Spleen (tissue), 13 donors: ENCODE measurements at regions of chr10 and their contacts with region 1.

Region 1: DNA sequence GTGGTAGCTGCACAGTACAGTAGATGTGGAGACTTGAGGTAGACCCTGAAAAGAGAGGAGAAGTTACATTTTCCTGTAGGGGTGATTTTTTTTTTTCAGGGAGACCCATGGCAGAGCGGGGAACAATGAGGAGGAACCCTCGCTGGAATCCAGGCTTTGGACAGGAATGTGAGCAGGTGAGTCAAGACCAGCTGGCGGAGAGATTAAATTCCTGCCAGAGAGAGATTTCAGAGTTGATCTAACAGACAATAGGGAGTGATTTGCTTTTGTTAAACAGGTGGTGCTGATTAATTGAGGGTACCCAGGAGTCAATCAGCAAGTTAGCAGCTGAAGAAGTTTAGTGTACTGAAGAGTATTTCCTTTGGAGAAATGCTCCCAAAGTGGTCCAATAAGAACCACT is 41.6 kb upstream of the MINDY3 start:
- DNase-seq: no peak
- H3K4me3 ChIP-seq: no peak overlapping the region
- H3K27ac ChIP-seq: no peak overlapping the region
- H3K4me1 ChIP-seq: no peaks in the 10 kb centered on the region
- H3K27me3 ChIP-seq: peaks cover 0 to 27% (median 0%) of the 10 kb centered on the region in 7 donors
- CTCF ChIP-seq: no peak
- POLR2A ChIP-seq: no peak

Region 2: DNA sequence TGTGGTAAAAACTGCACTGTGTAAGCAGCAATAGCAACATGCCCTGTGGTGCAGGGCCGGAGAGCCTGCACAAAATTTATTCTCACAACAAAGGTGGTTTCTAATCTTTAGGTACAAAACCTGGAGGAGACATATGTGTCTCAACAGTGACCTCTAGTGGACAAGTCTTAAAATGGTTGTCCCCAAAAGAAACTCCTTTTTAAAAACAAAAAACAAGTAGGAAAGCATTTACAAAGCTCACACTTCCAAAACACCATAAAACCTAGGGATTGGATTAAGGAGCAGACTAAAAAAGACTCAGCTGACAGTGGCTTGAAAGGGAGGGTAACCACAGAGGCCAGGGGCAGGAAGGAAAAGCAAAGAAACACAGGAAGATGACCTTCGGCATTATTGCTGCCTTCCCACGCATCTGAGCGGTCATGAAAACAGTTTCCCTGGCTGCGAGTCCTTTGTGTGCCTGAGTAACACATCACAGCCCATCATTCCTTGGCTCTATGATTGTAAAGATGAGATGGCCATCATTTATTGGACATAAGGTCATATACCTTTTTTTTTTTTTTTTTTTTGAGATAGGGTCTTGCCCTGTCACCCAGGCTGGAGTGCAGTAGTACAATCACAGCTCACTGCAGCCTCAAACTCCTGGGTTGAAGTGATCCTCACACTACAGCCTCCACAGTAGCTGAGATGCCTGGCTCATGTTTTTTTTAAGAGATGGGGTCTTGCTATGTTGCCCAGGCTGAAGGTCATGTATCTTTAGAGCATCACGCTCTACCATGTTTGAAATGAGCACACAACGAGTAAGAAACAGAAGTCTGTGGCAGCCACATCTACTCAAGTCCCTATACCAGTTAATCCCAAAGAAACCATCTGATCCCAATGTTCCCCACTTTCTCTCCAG is 875.8 kb after region 1 on chr10:
- intact Hi-C with region 1: loop called (anchors 10 kb)
- DNase-seq: no peak
- H3K4me3 ChIP-seq: no peak overlapping the region
- H3K27ac ChIP-seq: peak overlapping the region in 7 of 8 donors; percentile 6 to 74 (median 54)
- H3K4me1 ChIP-seq: peaks cover 6 to 45% (median 26%) of the 10 kb centered on the region in 6 donors
- H3K27me3 ChIP-seq: no peaks in the 10 kb centered on the region
- CTCF ChIP-seq: peak; percentile 51 to 85 (median 75)
- POLR2A ChIP-seq: no peak

Region 3: DNA sequence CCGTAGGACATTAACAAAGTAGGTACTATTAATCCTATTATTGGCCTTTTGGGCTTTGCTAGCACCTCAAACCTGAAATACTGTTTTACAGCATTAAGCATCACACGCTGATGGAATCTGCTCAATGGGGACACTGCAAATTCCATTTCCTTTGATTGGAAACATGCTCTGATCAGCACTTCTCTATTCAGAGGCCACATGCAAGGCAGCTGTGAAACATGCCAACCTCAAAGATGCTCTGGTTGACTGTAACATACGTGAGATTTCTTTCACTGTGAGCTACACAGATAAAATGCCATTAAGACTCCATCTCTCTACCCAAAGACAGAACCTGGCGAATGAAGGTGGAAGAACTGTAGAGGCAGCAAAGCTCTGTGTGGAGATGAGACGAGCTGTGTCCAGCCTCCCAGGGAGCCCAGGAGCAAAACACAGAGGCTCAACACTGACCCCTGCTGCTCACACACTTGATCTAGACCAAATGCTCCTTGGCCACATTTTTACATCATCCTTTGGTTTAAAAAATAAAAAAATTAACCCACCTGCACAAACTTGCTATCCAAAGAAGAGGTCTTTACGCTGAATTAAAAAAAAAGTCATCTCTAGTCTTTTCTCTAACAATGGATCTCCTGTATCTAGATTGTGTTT is 907.3 kb after region 1 on chr10:
- intact Hi-C with region 1: loop called (anchors 10 kb)
- DNase-seq: no peak
- H3K4me3 ChIP-seq: no peak overlapping the region
- H3K27ac ChIP-seq: no peak overlapping the region
- H3K4me1 ChIP-seq: peaks cover 0 to 50% (median 21%) of the 10 kb centered on the region in 6 donors
- H3K27me3 ChIP-seq: no peaks in the 10 kb centered on the region
- CTCF ChIP-seq: peak in 9 of 11 experiments; percentile 26 to 67 (median 50)
- POLR2A ChIP-seq: no peak